ENCODE measurements at regions of chr2 and their contacts with region 1.

Region 1: DNA sequence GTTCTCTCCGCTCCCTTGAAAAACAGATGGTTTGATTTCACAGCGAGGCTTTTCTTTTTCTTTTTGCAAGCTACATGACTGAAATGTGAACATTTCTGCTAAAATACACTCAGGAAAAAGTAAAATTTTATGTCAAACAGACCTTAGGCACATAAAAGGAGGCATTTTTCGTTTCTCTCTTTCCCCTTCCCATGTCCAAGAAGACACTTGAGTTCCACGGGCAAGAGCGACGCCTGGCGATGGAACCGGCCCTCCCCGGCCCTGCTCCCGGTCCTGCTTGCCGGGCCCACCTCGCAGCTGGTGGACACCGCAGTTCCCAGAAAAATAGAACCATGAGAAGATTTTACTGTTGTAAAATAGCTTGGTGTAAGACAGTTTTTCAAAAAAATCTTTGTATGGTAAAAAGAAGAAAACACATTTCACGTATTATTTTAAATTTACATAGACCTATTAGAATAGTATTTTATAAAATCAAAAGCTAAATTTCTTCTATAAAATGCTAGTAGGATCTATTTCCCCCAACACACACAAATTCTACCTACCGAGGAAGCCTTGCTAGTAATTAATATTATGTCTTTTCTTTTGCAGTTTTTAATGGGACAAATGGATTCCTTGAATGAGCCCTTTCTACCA is 2.3 kb upstream of the ALKAL2 start:
- DNase-seq: peak; percentile 77
- H3K4me3 Mint-ChIP-seq: peak overlapping the region; percentile 68
- H3K27ac Mint-ChIP-seq: no peak overlapping the region
- H3K4me1 Mint-ChIP-seq: peaks cover 5% of the 10 kb centered on the region
- H3K27me3 Mint-ChIP-seq: peaks cover 41% of the 10 kb centered on the region
- CTCF ChIP-seq: peak; percentile 64

Region 2: GRCh38 chr2:141611-142010 is 148.6 kb before region 1 on chr2:
- CTCF ChIA-PET with region 1: no interaction called
- intact Hi-C with region 1: loop called (anchors 5 kb)
- DNase-seq: no peak
- H3K4me3 Mint-ChIP-seq: no peak overlapping the region
- H3K27ac Mint-ChIP-seq: no peak overlapping the region
- H3K4me1 Mint-ChIP-seq: no peaks in the 10 kb centered on the region
- H3K27me3 Mint-ChIP-seq: no peaks in the 10 kb centered on the region
- CTCF ChIP-seq: no peak

Region 3: DNA sequence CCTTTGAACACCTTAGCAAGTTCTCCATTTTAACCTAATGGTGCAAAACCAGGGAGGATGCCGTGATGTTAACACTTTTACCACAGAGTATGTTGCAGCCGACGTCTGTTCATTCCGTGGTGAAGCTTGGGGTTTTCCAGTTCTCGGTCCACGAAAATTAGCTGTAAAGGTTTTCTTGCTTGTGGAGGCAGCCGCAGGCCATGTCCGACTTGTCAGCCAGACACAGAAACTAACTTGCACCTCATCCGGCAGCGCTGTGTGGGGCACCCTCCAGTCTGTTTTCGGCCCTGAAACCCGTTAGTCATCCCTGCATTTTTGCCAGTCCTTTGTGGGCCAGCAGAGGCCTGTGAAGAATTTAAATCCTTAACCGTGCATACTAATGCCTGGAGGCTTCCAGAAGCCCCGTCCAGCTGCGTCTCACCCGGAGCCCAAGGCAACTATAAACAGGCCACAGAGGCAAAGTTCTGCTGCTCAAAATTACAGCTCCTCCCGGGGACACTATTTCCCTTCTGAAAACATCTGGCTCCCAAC is 97.0 kb before region 1 on chr2:
- CTCF ChIA-PET with region 1: no interaction called
- intact Hi-C with region 1: no loop called
- DNase-seq: no peak
- H3K4me3 Mint-ChIP-seq: no peak overlapping the region
- H3K27ac Mint-ChIP-seq: no peak overlapping the region
- H3K4me1 Mint-ChIP-seq: no peaks in the 10 kb centered on the region
- H3K27me3 Mint-ChIP-seq: no peaks in the 10 kb centered on the region
- CTCF ChIP-seq: no peak

Region 4: DNA sequence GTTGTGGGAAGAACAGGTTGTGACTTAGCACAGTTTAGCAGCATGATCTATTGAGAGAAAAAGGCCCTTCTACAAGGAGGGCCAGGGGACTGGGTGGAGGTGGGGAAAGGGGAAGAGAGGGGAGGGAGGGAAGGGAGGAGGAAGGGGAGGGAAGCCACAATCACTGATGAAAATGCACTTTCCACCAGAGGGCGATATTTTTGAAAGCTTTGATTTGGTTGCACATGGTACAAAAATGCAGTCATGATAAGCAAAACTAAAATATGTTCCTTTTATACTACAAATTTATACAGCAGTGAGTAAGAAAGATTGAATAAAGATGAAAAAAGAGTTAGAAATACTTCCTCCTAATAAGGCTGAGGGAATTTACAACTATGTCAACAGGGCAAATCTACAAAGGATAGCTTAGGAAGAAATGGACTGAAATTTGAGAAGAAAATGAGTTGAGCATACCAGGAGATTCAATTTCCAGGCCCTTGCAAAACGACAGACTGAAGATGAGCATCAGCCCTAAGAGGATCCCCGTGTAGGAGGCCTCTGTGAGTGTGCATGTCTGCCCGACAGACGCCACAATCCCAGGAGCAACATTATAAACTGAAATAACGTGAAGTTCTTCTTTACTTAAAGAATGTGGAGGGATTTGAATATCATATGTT is 43.6 kb before region 1 on chr2:
- CTCF ChIA-PET with region 1: interaction called, 4 read pairs
- intact Hi-C with region 1: loop called (anchors 1 kb)
- DNase-seq: peak; percentile 55
- H3K4me3 Mint-ChIP-seq: no peak overlapping the region
- H3K27ac Mint-ChIP-seq: no peak overlapping the region
- H3K4me1 Mint-ChIP-seq: peaks cover 8% of the 10 kb centered on the region
- H3K27me3 Mint-ChIP-seq: no peaks in the 10 kb centered on the region
- CTCF ChIP-seq: peak; percentile 74

Region 5: DNA sequence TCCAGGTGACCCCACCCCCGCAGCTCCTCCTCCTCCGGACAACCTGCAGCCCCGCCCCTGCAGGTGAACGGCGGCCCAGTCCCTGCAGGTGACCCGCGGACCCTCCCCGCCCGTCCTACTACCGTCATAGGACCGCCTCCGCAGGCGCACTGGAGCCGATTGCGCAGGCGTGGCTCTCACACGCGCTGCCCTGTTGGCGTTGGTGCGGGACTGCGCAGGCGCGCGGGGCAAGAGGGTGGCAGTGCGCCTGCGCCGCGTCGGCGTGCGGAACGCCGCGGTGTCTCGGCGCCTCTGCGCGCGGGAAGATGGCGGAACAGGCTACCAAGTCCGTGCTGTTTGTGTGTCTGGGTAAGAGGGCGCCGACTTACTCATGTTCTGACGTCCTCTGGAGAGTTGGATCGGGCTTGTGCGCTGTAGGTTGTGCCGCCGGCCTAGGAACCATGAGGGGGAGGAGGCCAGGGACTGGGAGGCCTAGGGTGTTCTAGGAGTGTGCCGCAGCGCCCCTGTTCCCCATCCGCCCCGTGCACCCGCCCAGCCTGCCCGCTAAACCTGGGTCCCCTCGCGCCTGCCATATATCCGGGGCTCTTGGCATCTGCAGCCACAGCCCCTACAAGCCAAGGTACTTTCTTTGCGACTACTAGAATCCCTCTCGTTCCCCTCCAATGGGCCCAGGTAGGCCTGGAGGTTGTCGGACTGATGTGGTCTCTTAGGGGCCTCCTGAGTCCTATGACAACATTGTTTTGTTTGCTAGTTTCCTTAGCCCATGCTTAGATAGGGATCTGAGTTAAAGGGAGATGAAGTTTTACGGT is 25.3 kb before region 1 on chr2 and contains the start of gene ACP1:
- CTCF ChIA-PET with region 1: no interaction called
- intact Hi-C with region 1: loop called (anchors 1 kb)
- DNase-seq: peak; percentile 99
- H3K4me3 Mint-ChIP-seq: peak within 1 kb of the TSS; percentile 99
- H3K27ac Mint-ChIP-seq: peak within 1 kb of the TSS; percentile 92
- H3K4me1 Mint-ChIP-seq: peaks cover 45% of the 10 kb centered on the region
- H3K27me3 Mint-ChIP-seq: no peaks in the 10 kb centered on the region
- CTCF ChIP-seq: no peak
- total RNA-seq, gene ACP1: 120 and 124 TPM in 2 replicates

Region 6: GRCh38 chr2:505941-506340 is 215.7 kb after region 1 on chr2:
- CTCF ChIA-PET with region 1: no interaction called
- intact Hi-C with region 1: no loop called
- DNase-seq: no peak
- H3K4me3 Mint-ChIP-seq: no peak overlapping the region
- H3K27ac Mint-ChIP-seq: no peak overlapping the region
- H3K4me1 Mint-ChIP-seq: no peaks in the 10 kb centered on the region
- H3K27me3 Mint-ChIP-seq: no peaks in the 10 kb centered on the region
- CTCF ChIP-seq: no peak

Region 7: DNA sequence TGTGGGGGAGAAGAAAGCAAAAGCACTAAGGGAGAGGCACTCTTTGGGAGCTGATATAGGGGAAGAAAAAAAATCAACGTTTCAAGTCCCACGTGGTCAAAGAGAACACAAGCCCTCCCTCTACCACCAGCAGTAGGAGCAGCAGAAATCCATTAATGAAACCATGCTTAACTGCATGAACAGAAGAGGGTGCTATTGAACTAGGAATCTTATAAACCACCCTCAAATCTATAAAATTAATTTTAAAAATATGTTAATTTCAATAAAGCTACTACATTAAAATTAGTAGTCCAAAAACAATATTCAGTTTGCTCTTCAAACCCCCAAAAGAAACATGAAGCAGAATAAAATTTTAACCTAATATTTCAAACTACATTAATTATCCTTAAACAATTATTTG is 239.2 kb after region 1 on chr2:
- CTCF ChIA-PET with region 1: no interaction called
- intact Hi-C with region 1: loop called (anchors 10 kb)
- DNase-seq: peak; percentile 34
- H3K4me3 Mint-ChIP-seq: no peak overlapping the region
- H3K27ac Mint-ChIP-seq: peak overlapping the region; percentile 4
- H3K4me1 Mint-ChIP-seq: no peaks in the 10 kb centered on the region
- H3K27me3 Mint-ChIP-seq: no peaks in the 10 kb centered on the region
- CTCF ChIP-seq: peak; percentile 54

Measured in Calu3 (cell line).